ENCODE measurements at regions of chr22 and their contacts with region 1.

Region 1: DNA sequence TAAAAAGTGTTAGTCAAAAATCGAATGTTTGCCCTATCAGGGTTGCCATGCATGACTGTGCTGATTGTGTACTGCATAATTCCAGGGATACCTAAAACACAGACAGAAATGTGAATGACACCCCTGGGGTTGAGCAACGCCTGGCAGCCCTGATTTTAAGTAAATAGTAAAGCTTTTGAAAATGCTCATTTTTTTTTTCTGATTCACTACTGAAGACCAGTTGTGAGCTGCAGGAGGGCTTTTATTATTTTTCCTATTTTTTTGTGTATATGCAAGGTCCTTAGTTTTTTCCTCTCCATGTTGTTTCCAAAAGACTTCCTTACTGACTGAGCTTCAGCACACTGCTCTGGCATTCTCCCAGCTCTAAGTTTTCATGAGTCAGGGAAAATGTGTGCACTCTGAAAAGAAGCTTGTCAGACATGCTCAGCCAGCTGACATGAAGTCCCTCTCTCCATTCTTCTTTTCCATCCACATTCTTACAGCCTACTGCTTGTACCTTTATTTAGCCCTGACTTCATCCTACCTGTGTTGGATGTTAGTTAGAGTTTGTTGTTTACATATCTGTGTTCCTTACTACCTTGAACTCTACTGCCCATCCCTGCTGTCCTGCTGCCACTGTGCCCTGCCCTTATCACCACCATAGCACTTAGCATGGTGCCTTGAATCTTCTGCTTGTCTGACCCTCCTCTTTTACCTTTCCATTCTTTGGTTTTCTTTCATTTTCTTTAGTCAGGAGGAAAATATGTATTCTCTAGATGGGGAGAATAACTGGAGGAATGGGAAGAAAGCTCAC is 79.5 kb downstream of the HORMAD2 start:
- DNase-seq: no peak
- H3K4me3 Mint-ChIP-seq: peak overlapping the region; percentile 37
- H3K27ac Mint-ChIP-seq: peak overlapping the region; percentile 96
- H3K4me1 Mint-ChIP-seq: peaks cover 53% of the 10 kb centered on the region
- H3K27me3 Mint-ChIP-seq: no peaks in the 10 kb centered on the region

Region 2: DNA sequence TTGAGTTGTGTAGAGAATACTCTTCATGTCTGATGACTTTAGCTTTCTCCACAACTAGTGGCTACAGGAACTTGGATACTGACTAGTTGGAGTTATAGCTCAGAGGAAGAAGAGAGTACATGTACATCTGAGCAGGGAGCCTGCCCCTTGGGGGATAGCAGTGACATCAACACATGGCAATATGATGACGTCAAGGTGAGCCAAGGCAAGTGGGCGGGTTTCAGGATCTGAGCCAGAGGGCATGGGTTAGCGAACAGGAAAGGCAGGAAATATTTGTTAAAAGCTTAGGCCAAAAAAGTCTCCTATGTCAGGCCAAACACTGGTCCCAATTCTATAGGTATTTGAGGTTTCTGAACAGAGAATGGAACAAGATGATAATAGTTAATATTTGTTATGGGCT is 121.5 kb before region 1 on chr22:
- intact Hi-C with region 1: no loop called
- DNase-seq: no peak
- H3K4me3 Mint-ChIP-seq: no peak overlapping the region
- H3K27ac Mint-ChIP-seq: no peak overlapping the region
- H3K4me1 Mint-ChIP-seq: peaks cover 3% of the 10 kb centered on the region
- H3K27me3 Mint-ChIP-seq: peaks cover 2% of the 10 kb centered on the region

Region 3: GRCh38 chr22:30121960-30122359 is 37.8 kb before region 1 on chr22:
- intact Hi-C with region 1: loop called (anchors 2 kb)
- DNase-seq: no peak
- H3K4me3 Mint-ChIP-seq: peak overlapping the region; percentile 32
- H3K27ac Mint-ChIP-seq: no peak overlapping the region
- H3K4me1 Mint-ChIP-seq: peaks cover 28% of the 10 kb centered on the region
- H3K27me3 Mint-ChIP-seq: no peaks in the 10 kb centered on the region

Region 4: GRCh38 chr22:30183861-30184278 is 24.1 kb after region 1 on chr22:
- intact Hi-C with region 1: loop called (anchors 2 kb)
- DNase-seq: peak; percentile 81
- H3K4me3 Mint-ChIP-seq: peak overlapping the region; percentile 61
- H3K27ac Mint-ChIP-seq: peak overlapping the region; percentile 96
- H3K4me1 Mint-ChIP-seq: peaks cover 82% of the 10 kb centered on the region
- H3K27me3 Mint-ChIP-seq: no peaks in the 10 kb centered on the region